Activated CD4-positive, alpha-beta memory T cell treated with anti-CD3 and anti-CD28 coated beads, Interleukin-2, amount 10 ng/mL, durations not matched to agents 7 days and 5 days (primary cell): ENCODE measurements at regions of chr10 and their contacts with region 1.

Region 1: GRCh38 chr10:43407576-43408330 is 1.2 kb downstream of the HNRNPF start:
- DNase-seq: peak; percentile 88
- H3K4me3 Mint-ChIP-seq: peak overlapping the region; percentile 86
- H3K27ac Mint-ChIP-seq: peak overlapping the region; percentile 96
- H3K4me1 Mint-ChIP-seq: peaks cover 36% of the 10 kb centered on the region
- H3K27me3 Mint-ChIP-seq: no peaks in the 10 kb centered on the region

Region 2: GRCh38 chr10:43160046-43160918 is 247.5 kb before region 1 on chr10:
- CTCF ChIA-PET with region 1: no interaction called
- POLR2A ChIA-PET with region 1: no interaction called
- DNase-seq: no peak
- H3K4me3 Mint-ChIP-seq: no peak overlapping the region
- H3K27ac Mint-ChIP-seq: peak overlapping the region; percentile 49
- H3K4me1 Mint-ChIP-seq: peaks cover 65% of the 10 kb centered on the region
- H3K27me3 Mint-ChIP-seq: no peaks in the 10 kb centered on the region

Region 3: GRCh38 chr10:43287056-43288007 is 120.4 kb before region 1 on chr10:
- CTCF ChIA-PET with region 1: interaction called, 3 read pairs
- POLR2A ChIA-PET with region 1: interaction called, 11 read pairs
- DNase-seq: peak; percentile 86
- H3K4me3 Mint-ChIP-seq: peak overlapping the region; percentile 26
- H3K27ac Mint-ChIP-seq: peak overlapping the region; percentile 88
- H3K4me1 Mint-ChIP-seq: peaks cover 58% of the 10 kb centered on the region
- H3K27me3 Mint-ChIP-seq: peaks cover 9% of the 10 kb centered on the region

Region 4: GRCh38 chr10:43371418-43371817 is 36.3 kb before region 1 on chr10 and contains the start of gene FXYD4:
- CTCF ChIA-PET with region 1: no interaction called
- POLR2A ChIA-PET with region 1: no interaction called
- DNase-seq: no peak
- H3K4me3 Mint-ChIP-seq: no peak within 1 kb of the TSS
- H3K27ac Mint-ChIP-seq: no peak within 1 kb of the TSS
- H3K4me1 Mint-ChIP-seq: peaks cover 11% of the 10 kb centered on the region
- H3K27me3 Mint-ChIP-seq: no peaks in the 10 kb centered on the region
- total RNA-seq, gene FXYD4: not detected

Region 5: GRCh38 chr10:43390759-43391158 is 17.0 kb before region 1 on chr10:
- CTCF ChIA-PET with region 1: interaction called, 11 read pairs
- POLR2A ChIA-PET with region 1: interaction called, 192 read pairs
- DNase-seq: no peak
- H3K4me3 Mint-ChIP-seq: no peak overlapping the region
- H3K27ac Mint-ChIP-seq: peak overlapping the region; percentile 22
- H3K4me1 Mint-ChIP-seq: peaks cover 90% of the 10 kb centered on the region
- H3K27me3 Mint-ChIP-seq: no peaks in the 10 kb centered on the region

Region 6: GRCh38 chr10:43420369-43421200 is 12.8 kb after region 1 on chr10:
- CTCF ChIA-PET with region 1: interaction called, 14 read pairs
- POLR2A ChIA-PET with region 1: interaction called, 197 read pairs
- DNase-seq: peak; percentile 90
- H3K4me3 Mint-ChIP-seq: peak overlapping the region; percentile 85
- H3K27ac Mint-ChIP-seq: peak overlapping the region; percentile 99
- H3K4me1 Mint-ChIP-seq: peaks cover 47% of the 10 kb centered on the region
- H3K27me3 Mint-ChIP-seq: no peaks in the 10 kb centered on the region

Region 7: DNA sequence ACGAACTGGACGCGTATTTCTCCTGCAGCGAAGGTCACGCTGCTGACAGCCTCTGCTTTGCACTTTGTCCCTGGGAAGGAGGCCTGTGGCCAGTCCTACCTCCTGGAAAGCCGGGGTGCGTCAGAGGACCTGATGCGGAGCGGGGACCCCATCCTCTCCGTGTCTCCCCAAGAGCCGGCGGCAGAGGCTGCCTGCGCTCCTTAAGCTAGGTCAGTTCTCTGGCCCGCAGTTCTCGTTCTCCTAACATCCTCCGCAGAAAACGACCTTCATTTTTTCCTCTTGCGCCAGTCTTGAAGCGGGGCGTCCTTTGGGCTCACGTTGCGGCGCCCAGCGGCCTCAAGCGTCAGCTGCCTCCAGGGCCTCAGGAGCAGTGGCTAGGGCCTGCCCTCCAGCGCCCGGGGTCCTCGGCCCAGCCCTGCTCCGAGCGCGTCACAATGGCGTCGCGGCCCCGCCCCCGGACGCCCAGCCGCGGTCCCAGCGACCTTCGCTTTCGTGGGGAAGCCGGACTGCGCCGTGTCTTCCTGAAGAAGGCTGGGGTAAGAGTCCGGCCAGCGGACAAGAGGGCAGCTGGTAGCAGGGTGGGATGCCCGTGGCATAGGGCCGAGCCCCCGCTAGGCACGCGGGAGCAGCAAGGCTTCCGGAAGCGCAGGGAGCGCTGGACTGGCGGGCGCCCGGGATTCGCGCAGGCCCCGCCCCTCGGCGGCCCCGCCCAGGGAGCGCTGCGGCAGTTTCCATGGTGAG is 28.8 kb after region 1 on chr10 and contains the start of gene ZNF487:
- CTCF ChIA-PET with region 1: interaction called, 3 read pairs
- POLR2A ChIA-PET with region 1: interaction called, 68 read pairs
- DNase-seq: peak; percentile 92
- H3K4me3 Mint-ChIP-seq: peak within 1 kb of the TSS; percentile 95
- H3K27ac Mint-ChIP-seq: peak within 1 kb of the TSS; percentile 95
- H3K4me1 Mint-ChIP-seq: peaks cover 32% of the 10 kb centered on the region
- H3K27me3 Mint-ChIP-seq: no peaks in the 10 kb centered on the region
- total RNA-seq, gene ZNF487: 6.1 TPM